IMR-90 (cell line): ENCODE measurements at regions of chr7 and their contacts with region 1.

Region 1: DNA sequence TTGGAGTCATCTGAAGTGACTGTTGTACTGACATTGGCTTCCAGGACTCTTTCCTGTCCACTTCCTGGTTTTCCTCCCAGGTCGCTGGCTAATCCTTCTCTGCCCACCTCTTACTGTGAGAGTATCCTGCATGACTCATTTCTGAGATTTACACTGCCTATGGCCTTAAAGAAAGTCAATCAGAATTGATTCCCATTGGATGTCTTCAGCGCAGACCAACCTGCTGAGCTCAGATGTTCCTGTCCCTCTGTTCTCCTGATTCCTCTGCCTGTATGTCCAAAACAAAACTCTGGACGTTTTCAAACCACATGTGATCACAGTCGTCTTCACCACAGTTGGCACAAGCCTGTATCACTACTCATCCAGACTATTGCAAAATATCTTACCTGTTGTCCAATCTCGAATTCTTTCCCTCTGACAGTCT is 262.1 kb downstream of the CREB5 start:
- DNase-seq: peak; percentile 7
- ATAC-seq: no peak
- H3K4me3 ChIP-seq: no peak overlapping the region
- H3K27ac ChIP-seq: no peak overlapping the region
- H3K4me1 ChIP-seq: no peaks in the 10 kb centered on the region
- H3K27me3 ChIP-seq: no peaks in the 10 kb centered on the region
- CTCF ChIP-seq: no peak
- POLR2A ChIP-seq: no peak
- RAD21 ChIP-seq: no peak

Region 2: DNA sequence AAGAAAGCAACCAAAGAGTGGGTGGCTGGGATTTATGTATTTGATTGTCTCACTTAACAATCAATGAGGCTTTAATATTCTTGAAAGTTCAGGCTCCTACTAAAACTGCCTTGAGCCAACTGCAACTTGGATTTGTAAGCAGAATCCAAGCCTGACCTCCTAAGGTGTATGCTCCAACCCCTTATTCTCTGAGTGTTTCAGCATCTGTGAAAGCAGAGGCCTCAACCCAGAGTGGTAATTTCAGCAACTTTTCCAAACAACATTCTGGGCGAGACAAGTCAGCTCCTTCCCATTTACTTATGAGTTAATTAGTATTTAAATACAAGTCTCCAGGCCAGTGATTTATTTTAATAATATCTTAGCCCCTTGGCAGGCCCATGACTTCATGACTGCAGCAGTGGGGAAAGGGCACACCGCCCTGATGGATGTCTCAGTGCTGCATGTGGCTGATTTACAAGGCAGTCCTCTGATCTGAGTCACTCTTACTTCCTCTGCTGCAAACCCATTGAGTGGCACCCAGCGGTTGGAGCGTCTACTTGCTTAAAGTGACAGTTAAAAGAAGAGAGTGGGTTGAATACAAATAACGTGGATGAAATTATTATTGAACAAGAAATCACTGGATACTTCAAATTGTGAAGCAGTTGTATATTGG is 74.7 kb after region 1 on chr7:
- CTCF ChIA-PET with region 1: no interaction called
- POLR2A ChIA-PET with region 1: interaction called, 12 read pairs
- dilution Hi-C with region 1: no loop called
- in situ Hi-C with region 1: no loop called
- intact Hi-C with region 1: no loop called
- DNase-seq: peak; percentile 71
- ATAC-seq: peak; percentile 67
- H3K4me3 ChIP-seq: no peak overlapping the region
- H3K27ac ChIP-seq: no peak overlapping the region
- H3K4me1 ChIP-seq: peaks cover 2% of the 10 kb centered on the region
- H3K27me3 ChIP-seq: no peaks in the 10 kb centered on the region
- CTCF ChIP-seq: 0 out of 2 replicates have a peak, but pooled peaks have one; percentile 3
- POLR2A ChIP-seq: no peak
- RAD21 ChIP-seq: no peak

Region 3: GRCh38 chr7:29224726-29225125 is 550.4 kb after region 1 on chr7:
- CTCF ChIA-PET with region 1: no interaction called
- POLR2A ChIA-PET with region 1: no interaction called
- dilution Hi-C with region 1: no loop called
- in situ Hi-C with region 1: no loop called
- intact Hi-C with region 1: no loop called
- DNase-seq: no peak
- ATAC-seq: no peak
- H3K4me3 ChIP-seq: no peak overlapping the region
- H3K27ac ChIP-seq: no peak overlapping the region
- H3K4me1 ChIP-seq: no peaks in the 10 kb centered on the region
- H3K27me3 ChIP-seq: no peaks in the 10 kb centered on the region
- CTCF ChIP-seq: no peak
- POLR2A ChIP-seq: no peak
- RAD21 ChIP-seq: no peak